Activated CD4-positive, alpha-beta T cell treated with anti-CD3 and anti-CD28 coated beads, Interleukin-2, amount 10 ng/mL, durations not matched to agents 24 days and 14 days (primary cell): ENCODE measurements at regions of chr3 and their contacts with region 1.

Region 1: DNA sequence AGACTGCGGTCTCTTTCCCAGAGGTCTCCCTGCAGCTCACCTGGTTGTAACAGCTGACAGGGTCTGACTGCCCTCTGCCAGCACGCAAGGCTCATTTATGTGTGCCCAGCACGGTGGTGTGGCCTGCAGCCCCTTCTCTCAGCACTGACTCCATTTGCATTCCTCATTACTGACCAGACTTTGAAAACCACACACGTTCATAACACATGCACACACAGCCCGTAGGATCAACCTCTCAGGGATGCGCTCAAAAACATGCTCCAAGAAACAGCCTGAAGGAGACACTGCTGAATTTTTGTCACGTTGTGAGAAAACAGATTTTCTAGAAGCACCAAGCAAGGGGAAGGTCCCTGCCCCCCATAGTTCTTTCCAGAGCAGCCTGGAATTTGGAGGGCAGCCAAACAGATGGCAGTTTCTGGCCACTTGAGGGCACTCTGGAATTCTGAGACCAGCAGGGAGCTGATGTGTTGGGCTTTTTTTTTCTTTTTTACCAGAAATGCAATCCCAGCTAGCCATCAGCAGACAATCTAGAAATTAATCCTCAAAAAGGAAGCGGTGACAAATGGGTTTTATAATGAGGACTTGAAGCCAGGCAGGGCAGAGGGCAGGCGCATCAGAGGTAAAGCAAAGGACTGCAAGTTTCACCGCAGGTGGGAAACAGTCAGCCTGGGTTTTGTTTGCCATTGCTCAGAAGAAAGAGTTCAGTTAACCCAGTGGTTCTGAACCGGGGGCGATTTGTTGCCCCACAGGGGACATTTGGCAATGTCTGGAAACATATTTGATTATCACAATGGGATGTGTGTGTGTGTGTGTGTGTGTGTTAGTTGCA is 170.5 kb upstream of the PROK2 start:
- DNase-seq: peak; percentile 65
- H3K4me3 Mint-ChIP-seq: no peak overlapping the region
- H3K27ac Mint-ChIP-seq: peak overlapping the region; percentile 39
- H3K4me1 Mint-ChIP-seq: peaks cover 31% of the 10 kb centered on the region
- H3K27me3 Mint-ChIP-seq: no peaks in the 10 kb centered on the region

Region 2: DNA sequence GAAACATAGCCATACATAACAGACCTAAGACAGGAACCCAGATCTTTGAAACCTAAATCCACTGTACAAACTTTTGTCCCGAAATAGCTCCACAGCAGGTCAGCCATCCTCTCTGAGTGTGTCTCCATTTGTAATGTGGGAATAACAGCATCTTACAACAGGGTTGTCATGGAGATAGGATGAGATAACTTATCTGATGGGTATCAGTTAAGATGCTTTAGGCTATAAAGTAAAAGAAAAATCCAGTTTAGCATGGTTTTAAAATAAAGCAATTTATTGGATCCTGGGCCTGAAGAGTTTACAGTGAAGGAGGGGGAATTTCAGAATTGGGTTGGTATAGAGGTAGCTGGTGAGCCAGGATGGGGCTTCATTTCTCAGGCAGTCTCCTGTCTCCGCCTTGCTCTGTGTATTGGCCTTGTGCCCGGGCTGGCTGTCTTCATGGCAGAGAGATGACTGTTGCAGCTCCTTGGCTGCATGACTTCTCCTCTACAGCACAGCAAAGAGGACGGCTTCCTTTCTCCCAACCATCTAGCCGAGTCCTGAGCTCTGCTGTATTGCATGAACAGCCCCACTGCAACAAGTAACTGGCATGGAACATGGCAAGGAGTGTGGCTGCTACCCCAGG is 38.6 kb before region 1 on chr3:
- intact Hi-C with region 1: no loop called
- DNase-seq: no peak
- H3K4me3 Mint-ChIP-seq: no peak overlapping the region
- H3K27ac Mint-ChIP-seq: no peak overlapping the region
- H3K4me1 Mint-ChIP-seq: no peaks in the 10 kb centered on the region
- H3K27me3 Mint-ChIP-seq: peaks cover 10% of the 10 kb centered on the region

Region 3: DNA sequence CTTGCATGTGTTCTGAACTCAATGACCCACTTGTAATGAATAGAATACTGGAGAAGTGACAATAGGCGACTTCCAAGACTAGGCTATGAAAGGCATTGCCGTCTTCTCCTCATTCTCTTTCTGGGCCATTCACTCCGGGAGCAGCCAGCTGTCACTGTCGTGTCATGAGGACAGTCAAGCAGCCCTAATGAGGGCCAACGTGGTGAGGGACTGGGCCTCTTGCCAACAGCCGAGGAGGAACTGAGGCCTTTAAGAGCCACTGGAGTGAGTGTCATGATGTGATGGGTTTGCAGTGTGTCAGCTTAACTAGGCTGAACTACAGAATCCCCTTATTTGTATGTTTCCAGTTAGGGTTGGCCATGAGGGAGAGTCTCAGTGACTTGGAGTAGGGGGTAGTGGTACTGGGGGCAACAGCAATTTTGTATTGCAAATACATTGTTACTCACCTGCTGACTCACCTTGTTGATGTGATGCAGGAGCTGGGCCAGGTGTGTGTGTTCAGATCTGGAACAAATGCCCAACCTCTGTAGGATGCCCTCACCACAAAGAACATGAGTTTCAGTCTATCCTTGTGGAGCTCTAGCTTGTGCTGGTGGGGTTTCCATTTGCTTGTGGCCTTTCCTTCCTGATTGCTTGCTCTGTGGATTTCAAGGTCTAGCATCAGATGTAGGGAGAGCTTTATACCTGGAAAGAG is 18.0 kb after region 1 on chr3:
- intact Hi-C with region 1: no loop called
- DNase-seq: no peak
- H3K4me3 Mint-ChIP-seq: no peak overlapping the region
- H3K27ac Mint-ChIP-seq: no peak overlapping the region
- H3K4me1 Mint-ChIP-seq: peaks cover 13% of the 10 kb centered on the region
- H3K27me3 Mint-ChIP-seq: no peaks in the 10 kb centered on the region

Region 4: GRCh38 chr3:71984843-71985613 is 29.6 kb after region 1 on chr3:
- intact Hi-C with region 1: loop called (anchors 2 kb)
- DNase-seq: peak; percentile 75
- H3K4me3 Mint-ChIP-seq: peak overlapping the region; percentile 74
- H3K27ac Mint-ChIP-seq: peak overlapping the region; percentile 87
- H3K4me1 Mint-ChIP-seq: peaks cover 49% of the 10 kb centered on the region
- H3K27me3 Mint-ChIP-seq: no peaks in the 10 kb centered on the region

Region 5: GRCh38 chr3:71998995-71999673 is 43.7 kb after region 1 on chr3:
- intact Hi-C with region 1: loop called (anchors 5 kb)
- DNase-seq: no peak
- H3K4me3 Mint-ChIP-seq: no peak overlapping the region
- H3K27ac Mint-ChIP-seq: peak overlapping the region; percentile 58
- H3K4me1 Mint-ChIP-seq: peaks cover 30% of the 10 kb centered on the region
- H3K27me3 Mint-ChIP-seq: no peaks in the 10 kb centered on the region

Region 6: GRCh38 chr3:72270072-72270681 is 314.7 kb after region 1 on chr3:
- intact Hi-C with region 1: loop called (anchors 10 kb)
- DNase-seq: peak; percentile 65
- H3K4me3 Mint-ChIP-seq: peak overlapping the region; percentile 12
- H3K27ac Mint-ChIP-seq: peak overlapping the region; percentile 67
- H3K4me1 Mint-ChIP-seq: peaks cover 57% of the 10 kb centered on the region
- H3K27me3 Mint-ChIP-seq: no peaks in the 10 kb centered on the region